Pancreas (tissue), 10 donors: ENCODE measurements at regions of chr7 and their contacts with region 1.

Region 1: GRCh38 chr7:4681886-4682620 is at the start of gene FOXK1:
- DNase-seq: peak; percentile 68 to 93 (median 80)
- ATAC-seq: peak; percentile 83 to 87 (median 86)
- H3K4me3 ChIP-seq: peak within 1 kb of the TSS; percentile 83 to 93 (median 86)
- H3K27ac ChIP-seq: peak within 1 kb of the TSS; percentile 57 to 87 (median 74)
- H3K4me1 ChIP-seq: peaks cover 4 to 17% (median 8%) of the 10 kb centered on the region in 3 donors
- H3K27me3 ChIP-seq: no peaks in the 10 kb centered on the region
- CTCF ChIP-seq: no peak
- total RNA-seq, gene FOXK1: 13.8 to 20.6 (median 17.3) TPM

Region 2: DNA sequence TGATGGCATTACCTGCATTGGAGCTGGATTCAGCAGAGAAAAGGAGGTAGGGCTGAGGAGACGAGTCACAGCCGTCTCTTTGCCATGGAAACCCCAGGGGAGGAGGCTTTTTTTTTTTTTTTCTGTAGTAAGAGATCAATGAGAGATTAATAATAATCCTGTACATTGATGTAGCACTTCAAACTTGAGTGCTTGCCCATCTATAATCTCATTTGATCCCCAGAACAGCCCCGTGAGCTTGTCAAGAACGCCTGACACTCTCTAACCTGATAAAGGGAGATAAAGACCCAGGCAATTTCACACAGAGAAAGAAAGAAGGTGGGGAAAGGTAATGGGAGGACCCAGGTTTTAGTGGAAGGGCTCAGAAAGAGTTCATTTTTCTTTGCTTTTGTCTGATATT is 195.1 kb before region 1 on chr7:
- intact Hi-C with region 1: no loop called
- DNase-seq: no peak
- ATAC-seq: no peak
- H3K4me3 ChIP-seq: no peak overlapping the region
- H3K27ac ChIP-seq: no peak overlapping the region
- H3K4me1 ChIP-seq: no peaks in the 10 kb centered on the region
- H3K27me3 ChIP-seq: no peaks in the 10 kb centered on the region
- CTCF ChIP-seq: no peak

Region 3: GRCh38 chr7:4641667-4642467 is 40.2 kb before region 1 on chr7:
- intact Hi-C with region 1: loop called in 2 of 3 experiments (anchors 5 kb)
- DNase-seq: peak; percentile 91 to 99 (median 98)
- ATAC-seq: peak; percentile 96 to 97 (median 97)
- H3K4me3 ChIP-seq: peak overlapping the region; percentile 14 to 63 (median 47)
- H3K27ac ChIP-seq: peak overlapping the region; percentile 76 to 91 (median 84)
- H3K4me1 ChIP-seq: no peaks in the 10 kb centered on the region
- H3K27me3 ChIP-seq: no peaks in the 10 kb centered on the region
- CTCF ChIP-seq: no peak

Region 4: GRCh38 chr7:4744391-4745264 is 62.6 kb after region 1 on chr7:
- intact Hi-C with region 1: loop called in 1 of 3 experiments (anchors 10 kb)
- DNase-seq: peak; percentile 95 to 98 (median 97)
- ATAC-seq: peak; percentile 94 to 96 (median 95)
- H3K4me3 ChIP-seq: peak overlapping the region in 2 of 4 donors; percentile 7 to 19
- H3K27ac ChIP-seq: peak overlapping the region; percentile 60 to 92 (median 88)
- H3K4me1 ChIP-seq: peaks cover 5 to 26% (median 19%) of the 10 kb centered on the region in 3 donors
- H3K27me3 ChIP-seq: no peaks in the 10 kb centered on the region
- CTCF ChIP-seq: no peak

Region 5: GRCh38 chr7:5139998-5140397 is 457.9 kb after region 1 on chr7:
- intact Hi-C with region 1: no loop called
- DNase-seq: peak in 2 of 6 donors; percentile 14 to 57
- ATAC-seq: peak in 1 of 4 donors; percentile 44
- H3K4me3 ChIP-seq: no peak overlapping the region
- H3K27ac ChIP-seq: no peak overlapping the region
- H3K4me1 ChIP-seq: no peaks in the 10 kb centered on the region
- H3K27me3 ChIP-seq: no peaks in the 10 kb centered on the region
- CTCF ChIP-seq: peak in 1 of 4 donors; percentile 12